ENCODE measurements at regions of chr20 and their contacts with region 1.

Region 1: GRCh38 chr20:38229376-38230252 is 30.9 kb downstream of the KIAA1755 start:
- DNase-seq: peak in 1 of 4 donors; percentile 24
- ATAC-seq: peak; percentile 51
- H3K4me3 ChIP-seq: no peak overlapping the region
- H3K27ac ChIP-seq: no peak overlapping the region
- H3K4me1 ChIP-seq: peaks cover 0 to 10% of the 10 kb centered on the region in 2 donors
- H3K27me3 ChIP-seq: peaks cover 0 to 5% of the 10 kb centered on the region in 2 donors
- CTCF ChIP-seq: peak; percentile 22 to 37

Region 2: GRCh38 chr20:38321959-38322598 is 92.5 kb after region 1 on chr20:
- intact Hi-C with region 1: loop called in 1 of 2 experiments (anchors 10 kb)
- DNase-seq: peak in 2 of 4 donors; percentile 36 to 59
- ATAC-seq: peak; percentile 75
- H3K4me3 ChIP-seq: no peak overlapping the region
- H3K27ac ChIP-seq: no peak overlapping the region
- H3K4me1 ChIP-seq: no peaks in the 10 kb centered on the region
- H3K27me3 ChIP-seq: peaks cover 0 to 15% of the 10 kb centered on the region in 2 donors
- CTCF ChIP-seq: peak; percentile 41 to 52